ENCODE measurements at regions of chr1 and their contacts with region 1.

Region 1: GRCh38 chr1:33633019-33633801 is 160.8 kb downstream of the ZSCAN20 start:
- DNase-seq: peak; percentile 66 to 88 (median 81)
- ATAC-seq: peak; percentile 77
- H3K4me3 ChIP-seq: no peak overlapping the region
- H3K4me3 Mint-ChIP-seq: no peak overlapping the region
- H3K27ac ChIP-seq: no peak overlapping the region
- H3K27ac Mint-ChIP-seq: no peak overlapping the region
- H3K4me1 ChIP-seq: no peaks in the 10 kb centered on the region
- H3K4me1 Mint-ChIP-seq: peaks cover 2% of the 10 kb centered on the region
- H3K27me3 ChIP-seq: peaks cover 0 to 5% of the 10 kb centered on the region in 2 experiments
- H3K27me3 Mint-ChIP-seq: peaks cover 30% of the 10 kb centered on the region
- CTCF ChIP-seq: peak; percentile 98

Region 2: DNA sequence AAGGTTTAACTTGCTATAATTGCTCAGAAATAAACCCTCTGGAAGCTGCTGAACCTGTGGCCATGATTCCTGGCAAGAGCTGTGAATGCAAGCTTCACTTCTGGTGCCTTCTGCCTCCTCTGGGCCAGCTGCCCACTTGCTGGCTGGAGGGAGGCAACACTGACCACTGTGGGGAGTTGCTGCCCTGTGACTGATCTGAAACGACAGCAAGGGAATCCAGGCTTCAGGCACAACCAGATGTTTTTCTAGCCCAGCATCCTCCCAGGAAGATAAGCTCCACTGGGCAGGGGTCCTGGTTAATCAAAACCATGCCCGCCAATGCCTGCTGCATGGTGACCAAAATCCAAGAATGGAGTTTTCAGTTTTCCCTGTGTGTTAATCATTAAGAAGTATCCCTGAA is 50.7 kb after region 1 on chr1:
- CTCF ChIA-PET with region 1: no interaction called
- POLR2A ChIA-PET with region 1: no interaction called
- intact Hi-C with region 1: no loop called
- DNase-seq: no peak
- ATAC-seq: no peak
- H3K4me3 ChIP-seq: no peak overlapping the region
- H3K4me3 Mint-ChIP-seq: no peak overlapping the region
- H3K27ac ChIP-seq: no peak overlapping the region
- H3K27ac Mint-ChIP-seq: no peak overlapping the region
- H3K4me1 ChIP-seq: no peaks in the 10 kb centered on the region
- H3K4me1 Mint-ChIP-seq: no peaks in the 10 kb centered on the region
- H3K27me3 ChIP-seq: peaks cover 0 to 3% of the 10 kb centered on the region in 2 experiments
- H3K27me3 Mint-ChIP-seq: peaks cover 24% of the 10 kb centered on the region
- CTCF ChIP-seq: no peak

Region 3: DNA sequence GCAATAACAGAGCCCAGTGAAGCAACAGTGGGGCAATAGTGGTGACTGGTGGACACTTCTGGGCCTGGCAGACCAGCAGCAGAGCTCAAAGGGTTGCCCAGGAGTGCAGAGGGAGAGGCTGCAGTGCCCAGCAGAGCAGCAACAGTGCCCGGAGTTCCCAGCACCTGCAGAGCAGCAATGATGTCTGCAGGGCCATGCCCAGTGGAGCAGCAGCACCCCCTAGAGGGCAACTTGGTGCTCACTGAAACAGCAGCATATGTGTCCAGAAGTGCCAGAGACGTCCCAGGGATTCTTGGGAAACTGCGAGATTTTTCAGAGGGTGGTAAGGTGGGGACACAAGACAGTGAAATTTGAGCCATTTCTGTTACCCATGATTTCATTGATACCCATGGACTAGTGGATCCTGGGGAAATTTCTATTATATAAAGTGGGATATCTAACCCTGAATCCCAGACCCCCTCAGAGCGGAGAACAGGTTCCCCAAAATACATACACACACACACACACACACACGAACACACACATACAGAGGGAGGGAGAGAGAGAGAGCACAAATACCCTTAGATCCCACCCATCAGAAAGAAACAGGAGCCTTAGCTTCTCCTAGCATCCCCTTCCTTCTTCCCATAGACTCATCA is 964.8 kb after region 1 on chr1:
- CTCF ChIA-PET with region 1: interaction called, 4 read pairs
- POLR2A ChIA-PET with region 1: no interaction called
- intact Hi-C with region 1: loop called (anchors 1 to 10 kb)
- DNase-seq: peak in 7 of 9 experiments; percentile 4 to 48 (median 37)
- ATAC-seq: no peak
- H3K4me3 ChIP-seq: no peak overlapping the region
- H3K4me3 Mint-ChIP-seq: no peak overlapping the region
- H3K27ac ChIP-seq: no peak overlapping the region
- H3K27ac Mint-ChIP-seq: no peak overlapping the region
- H3K4me1 ChIP-seq: no peaks in the 10 kb centered on the region
- H3K4me1 Mint-ChIP-seq: no peaks in the 10 kb centered on the region
- H3K27me3 ChIP-seq: no peaks in the 10 kb centered on the region
- H3K27me3 Mint-ChIP-seq: peaks cover 10% of the 10 kb centered on the region
- CTCF ChIP-seq: no peak

Measured in CD8-positive, alpha-beta T cell (primary cell).